Activated T-helper 1 cell treated with anti-CD3 and anti-CD28 coated beads, Interleukin-12 subunit alpha, Interleukin-12 subunit beta, Interleukin-2, Interleukin-4 antibody, amounts not matched to agents 30 ng/mL and 10 ng/mL and 1 ng/mL, durations not matched to agents 14 hours and 24 hours and 36 hours (primary cell): ENCODE measurements at regions of chr21 and their contacts with region 1.

Region 1: DNA sequence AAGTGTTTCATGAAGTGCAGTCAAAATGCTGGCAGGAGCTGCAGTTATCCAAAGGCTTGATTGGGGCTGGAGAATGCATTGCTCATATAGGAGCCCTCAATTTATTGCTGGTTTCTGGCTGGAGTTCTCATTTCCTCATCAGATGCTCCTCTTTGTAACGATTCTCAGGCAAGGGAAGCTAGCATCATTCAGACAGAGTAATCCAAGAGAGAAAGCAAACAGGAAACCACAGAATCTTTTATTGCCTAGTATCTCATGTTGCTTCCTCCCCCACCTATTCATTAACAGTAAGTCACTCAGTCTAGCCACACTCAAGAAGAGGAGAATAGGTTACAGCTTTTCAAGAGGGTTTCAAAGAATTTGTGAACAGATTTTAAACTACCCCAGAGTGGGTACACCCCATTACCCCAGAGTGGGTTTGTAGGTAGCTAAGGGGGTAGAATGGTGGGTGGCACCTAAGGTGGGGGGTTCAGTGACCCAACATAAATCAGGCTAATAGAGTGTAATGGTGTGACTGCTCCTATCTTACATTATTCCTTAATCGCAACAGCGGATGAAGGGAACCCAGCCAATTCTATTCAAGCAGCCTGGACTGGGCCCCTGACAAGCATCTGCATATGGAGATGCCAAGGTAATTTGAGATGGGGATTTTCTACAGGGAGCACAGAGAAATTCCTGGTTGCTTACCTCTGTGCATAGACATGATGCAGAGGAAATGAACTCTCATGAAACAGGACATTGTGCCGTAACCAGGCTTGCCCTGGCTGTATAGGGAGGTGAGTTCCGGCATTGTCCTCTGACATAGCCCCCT is 67.1 kb downstream of the KCNJ15 start:
- DNase-seq: no peak
- H3K4me3 Mint-ChIP-seq: no peak overlapping the region
- H3K27ac Mint-ChIP-seq: no peak overlapping the region
- H3K4me1 Mint-ChIP-seq: peaks cover 21% of the 10 kb centered on the region
- H3K27me3 Mint-ChIP-seq: no peaks in the 10 kb centered on the region

Region 2: GRCh38 chr21:38282921-38283320 is 41.0 kb before region 1 on chr21:
- intact Hi-C with region 1: loop called (anchors 1 kb)
- DNase-seq: no peak
- H3K4me3 Mint-ChIP-seq: no peak overlapping the region
- H3K27ac Mint-ChIP-seq: no peak overlapping the region
- H3K4me1 Mint-ChIP-seq: no peaks in the 10 kb centered on the region
- H3K27me3 Mint-ChIP-seq: peaks cover 2% of the 10 kb centered on the region